HepG2 (cell line): ENCODE measurements at regions of chr5 and their contacts with region 1.

Region 1: GRCh38 chr5:140346348-140347101 is at the start of gene HBEGF:
- DNase-seq: peak; percentile 63
- ATAC-seq: peak; percentile 83
- H3K4me3 ChIP-seq: peak within 1 kb of the TSS; percentile 62 to 81 (median 81)
- H3K27ac ChIP-seq: no peak within 1 kb of the TSS
- H3K4me1 ChIP-seq: peaks cover 66% of the 10 kb centered on the region
- H3K27me3 ChIP-seq: 0 out of 5 replicates have a peak, but pooled peaks cover 0 to 7% of the 10 kb centered on the region in 2 experiments
- CTCF ChIP-seq: peak; percentile 58
- EP300 ChIP-seq: no peak
- POLR2A ChIP-seq: peak; percentile 63 to 85
- RAD21 ChIP-seq: 0 out of 2 replicates have a peak, but pooled peaks have one; percentile 32
- total RNA-seq, gene HBEGF: 0.77 and 1.7 TPM in 2 replicates

Region 2: GRCh38 chr5:140174465-140175366 is 171.8 kb before region 1 on chr5 and contains the start of gene CYSTM1:
- CTCF ChIA-PET with region 1: no interaction called
- POLR2A ChIA-PET with region 1: interaction called, 6 read pairs
- in situ Hi-C with region 1: no loop called
- intact Hi-C with region 1: loop called (anchors 5 kb)
- DNase-seq: peak; percentile 89
- ATAC-seq: peak; percentile 84
- H3K4me3 ChIP-seq: peak within 1 kb of the TSS; percentile 84 to 96 (median 89)
- H3K27ac ChIP-seq: peak within 1 kb of the TSS; percentile 89
- H3K4me1 ChIP-seq: peaks cover 61% of the 10 kb centered on the region
- H3K27me3 ChIP-seq: no peaks in the 10 kb centered on the region; a peak in 1 of 5 replicates
- CTCF ChIP-seq: no peak
- EP300 ChIP-seq: no peak
- POLR2A ChIP-seq: peak; percentile 74 to 81; a peak in 3 of 4 replicates
- RAD21 ChIP-seq: 0 out of 2 replicates have a peak, but pooled peaks have one; percentile 15
- total RNA-seq, gene CYSTM1: 40.0 and 52.7 TPM in 2 replicates

Region 3: GRCh38 chr5:140261403-140262171 is 84.9 kb before region 1 on chr5:
- CTCF ChIA-PET with region 1: no interaction called
- POLR2A ChIA-PET with region 1: interaction called, 14 read pairs
- in situ Hi-C with region 1: no loop called
- intact Hi-C with region 1: loop called (anchors 5 kb)
- DNase-seq: peak; percentile 85
- ATAC-seq: peak; percentile 97
- H3K4me3 ChIP-seq: peak overlapping the region in 1 of 3 experiments; percentile 11; a peak in 1 of 6 replicates
- H3K27ac ChIP-seq: peak overlapping the region; percentile 41
- H3K4me1 ChIP-seq: peaks cover 37% of the 10 kb centered on the region
- H3K27me3 ChIP-seq: no peaks in the 10 kb centered on the region
- CTCF ChIP-seq: peak; percentile 38
- EP300 ChIP-seq: no peak
- POLR2A ChIP-seq: no peak
- RAD21 ChIP-seq: no peak

Region 4: DNA sequence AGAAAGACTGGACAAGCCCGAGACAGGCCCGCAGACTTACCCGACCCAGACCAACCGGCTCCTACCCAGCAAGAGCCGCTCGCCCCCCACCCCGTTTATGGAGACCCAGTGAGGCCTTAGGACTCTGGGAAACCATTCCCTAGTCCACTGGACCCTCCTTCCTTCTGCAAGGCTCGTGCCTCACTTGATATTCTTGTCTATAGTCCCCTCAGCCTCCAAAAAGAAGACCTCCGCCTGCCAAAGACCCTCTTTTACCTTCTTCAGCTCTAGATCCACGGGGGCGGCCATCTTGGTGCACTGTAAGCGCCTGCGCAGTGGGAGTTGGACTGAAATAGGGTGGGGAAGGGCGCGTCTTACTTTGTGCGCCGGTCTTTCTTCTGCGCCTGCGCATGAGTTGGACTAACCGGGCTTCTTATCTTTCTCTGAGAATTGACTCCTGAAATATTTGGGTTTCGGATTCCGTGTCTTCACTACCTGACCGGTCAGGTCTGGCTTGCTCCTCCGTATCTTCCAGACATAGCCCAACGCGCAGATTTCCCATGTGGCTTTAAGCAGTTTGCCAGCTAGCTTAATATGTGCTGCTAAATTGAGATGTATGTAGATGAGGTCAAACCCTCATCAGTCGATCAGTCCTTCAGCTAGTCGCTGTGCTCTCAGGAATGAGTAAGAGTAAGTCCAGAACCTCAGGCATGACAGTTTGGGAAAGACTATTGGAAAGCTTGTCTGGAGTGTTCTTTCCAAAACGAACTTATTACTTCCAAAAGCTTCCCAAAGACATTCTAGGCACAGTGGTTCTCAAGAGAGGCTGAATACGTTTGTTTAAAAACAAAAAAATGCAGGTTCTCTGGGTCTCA is 43.5 kb before region 1 on chr5 and contains the start of gene PFDN1:
- CTCF ChIA-PET with region 1: no interaction called
- POLR2A ChIA-PET with region 1: interaction called, 15 read pairs
- in situ Hi-C with region 1: no loop called
- intact Hi-C with region 1: no loop called
- DNase-seq: peak; percentile 95
- ATAC-seq: peak; percentile 96
- H3K4me3 ChIP-seq: peak within 1 kb of the TSS; percentile 84 to 90 (median 89)
- H3K27ac ChIP-seq: peak within 1 kb of the TSS; percentile 79
- H3K4me1 ChIP-seq: peaks cover 53% of the 10 kb centered on the region
- H3K27me3 ChIP-seq: no peaks in the 10 kb centered on the region; a peak in 1 of 5 replicates
- CTCF ChIP-seq: no peak
- EP300 ChIP-seq: no peak
- POLR2A ChIP-seq: peak; percentile 63 to 74; a peak in 3 of 4 replicates
- RAD21 ChIP-seq: no peak
- total RNA-seq, gene PFDN1: 70.8 and 102 TPM in 2 replicates

Region 5: DNA sequence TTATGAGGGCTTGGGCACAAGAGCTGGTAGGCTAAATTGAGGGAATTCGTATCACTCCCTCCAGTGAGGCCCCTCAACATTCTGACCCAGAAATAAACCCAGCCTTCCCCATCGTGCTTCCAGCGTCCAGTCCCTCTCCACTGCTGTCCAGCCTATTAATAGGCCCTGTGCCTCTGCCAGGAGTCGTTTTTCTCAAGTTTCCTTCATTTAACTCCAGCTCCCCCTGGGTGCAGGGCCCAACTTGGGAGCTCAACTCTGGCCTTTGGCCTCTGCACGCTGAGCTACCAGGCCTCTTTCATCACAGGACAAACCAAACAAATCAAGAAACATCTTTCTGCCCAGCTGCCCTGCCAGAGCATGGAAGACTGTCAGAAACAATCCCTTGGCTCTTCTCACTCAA is 10.1 kb before region 1 on chr5:
- CTCF ChIA-PET with region 1: no interaction called
- POLR2A ChIA-PET with region 1: interaction called, 12 read pairs
- in situ Hi-C with region 1: no loop called
- intact Hi-C with region 1: no loop called
- DNase-seq: peak; percentile 63
- ATAC-seq: peak; percentile 93
- H3K4me3 ChIP-seq: no peak overlapping the region
- H3K27ac ChIP-seq: peak overlapping the region; percentile 1
- H3K4me1 ChIP-seq: peaks cover 28% of the 10 kb centered on the region
- H3K27me3 ChIP-seq: no peaks in the 10 kb centered on the region
- CTCF ChIP-seq: peak; percentile 45
- EP300 ChIP-seq: no peak
- POLR2A ChIP-seq: no peak
- RAD21 ChIP-seq: no peak

Region 6: DNA sequence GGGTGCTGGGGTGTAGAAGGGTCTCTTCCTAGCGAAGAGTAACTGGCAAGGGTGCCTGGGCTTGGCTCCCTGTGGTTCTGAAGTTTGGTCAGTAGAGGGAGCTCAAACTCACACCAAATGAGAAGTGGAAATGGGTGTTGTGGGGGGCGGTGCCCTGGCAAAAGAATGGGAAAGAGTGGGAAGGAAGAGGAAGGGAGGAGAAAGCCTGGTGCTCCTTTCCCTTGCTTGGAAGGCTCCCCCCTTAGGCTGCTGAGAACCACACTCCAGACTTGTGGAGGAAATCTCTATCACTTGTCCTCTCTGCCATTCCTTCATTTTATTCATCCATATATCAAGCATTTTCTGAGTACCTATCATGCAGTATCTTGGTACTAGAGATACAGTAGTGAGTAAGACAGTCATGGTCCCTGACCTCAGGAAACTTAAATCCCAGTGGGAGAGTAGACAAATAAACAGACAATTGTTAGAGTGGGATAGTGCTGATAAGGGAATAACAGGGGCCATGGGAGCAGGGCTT is 26.5 kb after region 1 on chr5:
- CTCF ChIA-PET with region 1: no interaction called
- POLR2A ChIA-PET with region 1: no interaction called
- in situ Hi-C with region 1: no loop called
- intact Hi-C with region 1: no loop called
- DNase-seq: peak; percentile 65
- ATAC-seq: peak; percentile 86
- H3K4me3 ChIP-seq: no peak overlapping the region
- H3K27ac ChIP-seq: no peak overlapping the region
- H3K4me1 ChIP-seq: peaks cover 24% of the 10 kb centered on the region
- H3K27me3 ChIP-seq: no peaks in the 10 kb centered on the region
- CTCF ChIP-seq: peak; percentile 91
- EP300 ChIP-seq: no peak
- POLR2A ChIP-seq: no peak
- RAD21 ChIP-seq: peak; percentile 73

Region 7: DNA sequence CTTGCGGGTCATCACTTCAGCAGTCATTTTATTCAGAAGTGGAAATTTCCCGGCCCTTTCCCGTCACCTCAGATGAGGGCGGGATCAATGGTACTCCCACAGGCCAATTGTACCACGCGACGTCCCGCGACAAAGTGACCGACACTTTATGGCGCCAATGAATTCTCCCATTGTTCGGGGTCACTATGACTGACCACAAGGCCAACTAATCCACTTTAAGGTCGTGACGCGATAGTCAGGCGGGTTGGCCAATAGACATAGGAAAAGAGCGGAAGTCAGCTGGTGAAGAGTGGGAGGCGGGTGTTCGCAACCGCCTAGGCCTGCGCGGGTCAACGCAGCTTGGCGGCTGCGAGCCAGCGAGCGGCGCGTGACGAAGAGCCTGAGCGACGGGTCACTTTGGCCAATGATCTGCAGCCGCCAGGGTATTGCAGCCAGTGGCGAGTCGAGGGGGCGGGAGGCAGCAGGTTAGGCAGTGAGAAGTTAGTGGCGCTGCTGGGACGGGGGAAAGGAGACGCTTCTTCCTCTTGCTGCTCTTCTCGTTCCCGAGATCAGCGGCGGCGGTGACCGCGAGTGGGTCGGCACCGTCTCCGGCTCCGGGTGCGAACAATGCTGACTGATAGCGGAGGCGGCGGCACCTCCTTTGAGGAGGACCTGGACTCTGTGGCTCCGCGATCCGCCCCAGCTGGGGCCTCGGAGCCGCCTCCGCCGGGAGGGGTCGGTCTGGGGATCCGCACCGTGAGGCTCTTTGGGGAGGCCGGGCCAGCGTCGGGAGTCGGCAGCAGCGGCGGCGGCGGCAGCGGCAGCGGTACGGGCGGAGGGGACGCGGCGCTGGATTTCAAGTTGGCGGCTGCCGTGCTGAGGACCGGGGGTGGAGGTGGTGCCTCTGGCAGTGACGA is 55.1 kb after region 1 on chr5 and contains the start of gene ANKHD1:
- CTCF ChIA-PET with region 1: no interaction called
- POLR2A ChIA-PET with region 1: interaction called, 13 read pairs
- in situ Hi-C with region 1: no loop called
- intact Hi-C with region 1: no loop called
- DNase-seq: peak; percentile 100
- ATAC-seq: peak; percentile 82
- H3K4me3 ChIP-seq: peak within 1 kb of the TSS; percentile 80 to 97 (median 95)
- H3K27ac ChIP-seq: peak within 1 kb of the TSS; percentile 97
- H3K4me1 ChIP-seq: peaks cover 49% of the 10 kb centered on the region
- H3K27me3 ChIP-seq: no peaks in the 10 kb centered on the region; a peak in 1 of 5 replicates
- CTCF ChIP-seq: no peak
- EP300 ChIP-seq: no peak; a peak in 1 of 4 replicates
- POLR2A ChIP-seq: peak; percentile 90 to 92
- RAD21 ChIP-seq: peak; percentile 16; the same call in 1 of the 2 replicates
- total RNA-seq, gene ANKHD1: 69.9 and 101 TPM in 2 replicates

Region 8: GRCh38 chr5:140488914-140489313 is 142.4 kb after region 1 on chr5:
- CTCF ChIA-PET with region 1: no interaction called
- POLR2A ChIA-PET with region 1: no interaction called
- in situ Hi-C with region 1: no loop called
- intact Hi-C with region 1: no loop called
- DNase-seq: no peak
- ATAC-seq: peak; percentile 56; the same call in 2 of the 3 replicates
- H3K4me3 ChIP-seq: no peak overlapping the region
- H3K27ac ChIP-seq: no peak overlapping the region
- H3K4me1 ChIP-seq: no peaks in the 10 kb centered on the region
- H3K27me3 ChIP-seq: no peaks in the 10 kb centered on the region
- CTCF ChIP-seq: no peak
- EP300 ChIP-seq: no peak
- POLR2A ChIP-seq: no peak
- RAD21 ChIP-seq: no peak

Region 9: GRCh38 chr5:140800816-140801493 is 454.4 kb after region 1 on chr5 and contains the start of gene PCDHA3:
- CTCF ChIA-PET with region 1: no interaction called
- POLR2A ChIA-PET with region 1: no interaction called
- in situ Hi-C with region 1: no loop called
- intact Hi-C with region 1: no loop called
- DNase-seq: peak; percentile 9
- ATAC-seq: no peak
- H3K4me3 ChIP-seq: no peak within 1 kb of the TSS
- H3K27ac ChIP-seq: no peak within 1 kb of the TSS
- H3K4me1 ChIP-seq: no peaks in the 10 kb centered on the region
- H3K27me3 ChIP-seq: no peaks in the 10 kb centered on the region
- CTCF ChIP-seq: peak; percentile 35
- EP300 ChIP-seq: no peak
- POLR2A ChIP-seq: no peak
- RAD21 ChIP-seq: no peak
- total RNA-seq, gene PCDHA3: not detected in 2 replicates